ENCODE measurements at regions of chr3 and their contacts with region 1.

Region 1: GRCh38 chr3:16864610-16865313 is 20.0 kb upstream of the PLCL2 start:
- DNase-seq: no peak
- H3K4me3 ChIP-seq: no peak overlapping the region
- H3K27ac ChIP-seq: peak overlapping the region in 1 of 2 donors; percentile 3
- H3K4me1 ChIP-seq: peaks cover 0 to 26% (median 9%) of the 10 kb centered on the region in 4 donors
- H3K27me3 ChIP-seq: no peaks in the 10 kb centered on the region
- CTCF ChIP-seq: no peak

Region 2: GRCh38 chr3:16300881-16301359 is 563.8 kb before region 1 on chr3:
- intact Hi-C with region 1: loop called (anchors 5 kb)
- DNase-seq: no peak
- H3K4me3 ChIP-seq: no peak overlapping the region
- H3K27ac ChIP-seq: no peak overlapping the region
- H3K4me1 ChIP-seq: peaks cover 0 to 6% (median 0%) of the 10 kb centered on the region in 4 donors
- H3K27me3 ChIP-seq: no peaks in the 10 kb centered on the region
- CTCF ChIP-seq: no peak